PC-3 (cell line): ENCODE measurements at regions of chr7 and their contacts with region 1.

Region 1: DNA sequence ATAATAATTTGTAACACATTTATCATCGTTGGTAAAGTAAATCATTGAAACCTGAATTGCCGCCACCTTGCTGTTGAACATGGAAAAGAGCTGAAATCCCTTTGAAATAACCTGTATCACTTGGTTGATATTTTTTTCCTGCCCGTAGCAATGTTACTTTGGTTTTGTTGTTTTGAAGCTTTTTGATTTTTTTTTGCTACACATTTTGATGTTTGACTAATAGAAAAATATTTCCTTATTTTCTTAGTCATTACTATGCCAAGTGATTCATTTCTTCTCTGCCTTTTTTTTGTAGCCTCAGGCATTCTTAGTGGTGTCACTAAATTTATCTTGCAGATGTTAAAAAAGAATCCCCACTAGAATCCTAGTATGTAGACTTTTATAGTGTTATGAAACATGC is 235.1 kb upstream of the MEOX2 start:
- DNase-seq: peak; percentile 83
- ATAC-seq: peak; percentile 51
- H3K4me3 ChIP-seq: peak overlapping the region; percentile 56
- H3K27ac ChIP-seq: peak overlapping the region; percentile 72
- H3K4me1 ChIP-seq: peaks cover 15% of the 10 kb centered on the region
- H3K27me3 ChIP-seq: no peaks in the 10 kb centered on the region
- CTCF ChIP-seq: peak; percentile 35; the same call in 1 of the 2 replicates

Region 2: GRCh38 chr7:15461576-15461975 is 460.0 kb before region 1 on chr7:
- CTCF ChIA-PET with region 1: no interaction called
- POLR2A ChIA-PET with region 1: no interaction called
- intact Hi-C with region 1: loop called (anchors 5 kb)
- DNase-seq: peak; percentile 57
- ATAC-seq: peak; percentile 60
- H3K4me3 ChIP-seq: no peak overlapping the region
- H3K27ac ChIP-seq: peak overlapping the region; percentile 47; the same call in 1 of the 2 replicates
- H3K4me1 ChIP-seq: peaks cover 11% of the 10 kb centered on the region
- H3K27me3 ChIP-seq: 0 out of 2 replicates have a peak, but pooled peaks cover 4% of the 10 kb centered on the region
- CTCF ChIP-seq: no peak

Region 3: GRCh38 chr7:16062269-16062668 is 140.7 kb after region 1 on chr7:
- CTCF ChIA-PET with region 1: interaction called, 3 read pairs
- POLR2A ChIA-PET with region 1: no interaction called
- intact Hi-C with region 1: loop called (anchors 1 kb)
- DNase-seq: peak; percentile 65
- ATAC-seq: peak; percentile 94
- H3K4me3 ChIP-seq: no peak overlapping the region
- H3K27ac ChIP-seq: no peak overlapping the region
- H3K4me1 ChIP-seq: peaks cover 14% of the 10 kb centered on the region; the same call in 1 of the 2 replicates
- H3K27me3 ChIP-seq: 0 out of 2 replicates have a peak, but pooled peaks cover 10% of the 10 kb centered on the region
- CTCF ChIP-seq: no peak